ENCODE measurements at regions of chr11 and their contacts with region 1.

Region 1: GRCh38 chr11:41461057-41461681 is 1.7 kb upstream of the LRRC4C start:
- DNase-seq: no peak
- ATAC-seq: no peak
- H3K4me3 ChIP-seq: no peak overlapping the region
- H3K27ac ChIP-seq: no peak overlapping the region
- H3K4me1 ChIP-seq: no peaks in the 10 kb centered on the region
- H3K27me3 ChIP-seq: no peaks in the 10 kb centered on the region

Region 2: GRCh38 chr11:42524534-42525227 is 1063.5 kb after region 1 on chr11:
- intact Hi-C with region 1: loop called in 1 of 4 experiments (anchors 5 kb)
- DNase-seq: peak; percentile 13 to 43 (median 21)
- ATAC-seq: peak; percentile 74 to 77
- H3K4me3 ChIP-seq: no peak overlapping the region
- H3K27ac ChIP-seq: no peak overlapping the region
- H3K4me1 ChIP-seq: no peaks in the 10 kb centered on the region
- H3K27me3 ChIP-seq: peaks cover 2% of the 10 kb centered on the region